ENCODE measurements at regions of chr7 and their contacts with region 1.

Region 1: GRCh38 chr7:107224374-107225223 is 55.8 kb downstream of the HBP1 start:
- DNase-seq: no peak

Region 2: DNA sequence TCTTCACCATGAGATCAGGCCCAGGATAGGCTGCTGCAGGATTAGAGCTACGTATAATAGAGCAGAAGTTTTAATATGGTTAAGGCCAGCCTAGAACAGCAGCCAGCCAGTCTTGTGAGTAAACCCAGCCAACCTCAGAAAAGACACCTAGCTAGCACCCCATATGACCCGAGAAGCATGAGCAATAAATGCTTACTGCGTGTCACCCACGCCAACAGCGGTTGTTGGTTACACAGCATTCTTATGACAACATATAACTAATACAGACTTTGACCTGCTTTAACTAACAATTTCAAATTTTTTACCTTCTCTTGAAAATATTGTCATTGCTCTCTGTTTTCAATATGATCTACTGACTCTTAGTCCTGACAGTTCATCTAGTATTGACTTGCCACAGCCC is 49.9 kb after region 1 on chr7:
- intact Hi-C with region 1: no loop called
- DNase-seq: no peak

Region 3: DNA sequence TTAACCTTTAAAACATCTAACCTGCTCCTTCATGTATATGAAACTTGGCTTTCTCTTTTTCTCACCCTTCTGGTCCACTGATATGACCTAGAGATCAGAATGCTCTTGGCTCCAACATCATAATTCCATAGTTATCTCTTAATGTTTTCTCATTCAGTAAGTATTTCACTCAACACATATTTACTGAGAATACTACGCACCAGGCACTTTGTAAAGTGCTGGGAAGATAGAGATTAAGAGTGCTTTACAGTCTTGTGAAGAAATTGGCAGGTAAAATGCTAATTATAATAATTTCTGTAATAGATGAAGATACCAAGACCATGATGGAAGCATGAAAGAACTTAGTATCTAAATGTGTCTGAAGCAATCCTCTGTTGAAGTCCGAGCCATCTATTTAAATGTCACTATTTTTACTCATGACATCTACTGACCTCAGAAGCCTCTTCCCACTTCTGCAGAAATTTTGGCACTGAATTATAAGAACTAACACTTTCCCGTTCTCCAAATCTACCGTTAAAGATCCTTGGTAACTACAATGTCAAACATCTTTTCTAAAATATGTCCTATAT is 60.4 kb after region 1 on chr7:
- intact Hi-C with region 1: loop called (anchors 5 kb)
- DNase-seq: no peak

Region 4: DNA sequence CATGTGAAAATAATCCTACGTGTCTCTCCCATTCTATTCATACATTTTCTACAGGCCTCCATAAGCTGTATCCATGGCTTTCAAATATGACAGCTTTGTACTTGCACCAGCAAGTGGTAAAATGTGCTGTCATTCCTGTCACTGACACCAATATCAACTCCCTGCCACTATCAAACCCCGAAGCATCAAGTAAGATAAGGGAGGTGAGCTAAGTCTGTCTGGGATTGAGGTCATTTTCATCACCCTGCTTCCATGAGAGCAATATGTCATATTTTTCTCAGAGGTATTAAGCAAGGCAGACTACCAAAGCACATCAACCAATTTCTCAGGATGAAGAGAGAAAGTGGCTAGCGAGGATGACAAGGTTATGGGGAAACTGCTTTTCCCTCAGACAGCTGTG is 256.3 kb after region 1 on chr7:
- intact Hi-C with region 1: loop called (anchors 5 kb)
- DNase-seq: no peak